Mammary epithelial cell (primary cell): ENCODE measurements at regions of chr20 and their contacts with region 1.

Region 1: DNA sequence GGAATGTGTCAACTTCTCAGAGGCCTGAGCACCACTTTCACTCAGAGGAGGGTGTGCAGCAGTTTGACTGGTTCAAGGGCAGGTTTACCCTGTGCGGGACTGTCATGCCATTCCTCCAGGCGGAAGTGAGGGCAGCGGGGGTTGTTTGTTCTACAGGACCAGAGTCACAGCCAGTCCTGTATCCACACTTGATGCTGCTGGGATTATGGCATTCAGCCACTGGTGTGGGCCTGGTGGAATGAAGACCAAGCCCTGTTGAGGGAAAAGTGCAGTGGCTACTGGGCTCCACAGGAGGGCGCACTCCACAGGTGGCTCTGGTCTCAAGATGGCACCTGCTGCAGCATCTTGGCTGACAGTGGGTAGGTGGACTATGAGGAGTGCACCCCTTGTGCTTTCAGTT is 14.8 kb downstream of the SEMG2 start:
- DNase-seq: no peak
- H3K4me3 ChIP-seq: no peak overlapping the region
- H3K27ac ChIP-seq: no peak overlapping the region
- H3K4me1 ChIP-seq: no peaks in the 10 kb centered on the region
- H3K27me3 ChIP-seq: peaks cover 4% of the 10 kb centered on the region
- CTCF ChIP-seq: peak; percentile 73 to 89

Region 2: DNA sequence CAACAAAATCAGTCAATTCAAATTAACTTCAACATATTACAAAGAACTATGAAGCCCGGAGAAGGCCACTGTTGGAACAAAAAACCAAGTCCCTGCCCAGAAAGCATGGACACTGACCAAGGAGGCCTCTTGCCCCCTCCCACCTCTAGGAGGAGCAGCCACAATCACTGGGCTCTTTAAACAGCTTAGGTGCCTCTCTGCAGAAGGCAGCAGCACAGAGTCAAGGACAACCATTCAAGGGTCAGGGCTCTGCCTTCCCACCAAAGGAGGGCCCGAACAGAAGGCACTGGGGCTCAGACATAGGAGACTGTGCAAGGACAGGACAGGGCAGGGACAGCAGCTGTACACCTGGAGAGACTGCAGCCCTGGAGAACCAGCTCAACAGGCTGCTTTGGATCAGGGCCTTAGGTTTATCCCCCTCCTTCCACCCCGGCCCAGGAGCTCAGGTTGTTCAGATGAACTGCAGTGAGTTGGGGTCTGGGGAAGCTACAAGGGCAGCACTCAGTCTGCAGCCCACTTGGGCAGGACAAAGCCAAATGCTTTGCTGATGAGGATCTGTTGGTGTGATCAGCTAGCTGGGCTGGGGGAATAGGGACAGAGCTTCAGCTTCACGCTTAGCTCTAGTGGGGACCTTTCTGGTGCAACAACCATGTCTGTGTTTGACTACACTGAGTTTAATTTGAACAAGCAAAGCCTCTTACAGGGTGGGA is 293.6 kb before region 1 on chr20:
- CTCF ChIA-PET with region 1: no interaction called
- dilution Hi-C with region 1: no loop called
- in situ Hi-C with region 1: no loop called
- intact Hi-C with region 1: no loop called
- DNase-seq: no peak
- H3K4me3 ChIP-seq: no peak overlapping the region
- H3K27ac ChIP-seq: no peak overlapping the region
- H3K4me1 ChIP-seq: no peaks in the 10 kb centered on the region
- H3K27me3 ChIP-seq: no peaks in the 10 kb centered on the region
- CTCF ChIP-seq: no peak

Region 3: GRCh38 chr20:45300961-45301360 is 65.0 kb after region 1 on chr20:
- CTCF ChIA-PET with region 1: interaction called, 10 read pairs
- dilution Hi-C with region 1: no loop called
- in situ Hi-C with region 1: no loop called
- intact Hi-C with region 1: no loop called
- DNase-seq: peak; percentile 13
- H3K4me3 ChIP-seq: no peak overlapping the region
- H3K27ac ChIP-seq: no peak overlapping the region
- H3K4me1 ChIP-seq: no peaks in the 10 kb centered on the region
- H3K27me3 ChIP-seq: no peaks in the 10 kb centered on the region
- CTCF ChIP-seq: peak; percentile 46 to 62

Region 4: DNA sequence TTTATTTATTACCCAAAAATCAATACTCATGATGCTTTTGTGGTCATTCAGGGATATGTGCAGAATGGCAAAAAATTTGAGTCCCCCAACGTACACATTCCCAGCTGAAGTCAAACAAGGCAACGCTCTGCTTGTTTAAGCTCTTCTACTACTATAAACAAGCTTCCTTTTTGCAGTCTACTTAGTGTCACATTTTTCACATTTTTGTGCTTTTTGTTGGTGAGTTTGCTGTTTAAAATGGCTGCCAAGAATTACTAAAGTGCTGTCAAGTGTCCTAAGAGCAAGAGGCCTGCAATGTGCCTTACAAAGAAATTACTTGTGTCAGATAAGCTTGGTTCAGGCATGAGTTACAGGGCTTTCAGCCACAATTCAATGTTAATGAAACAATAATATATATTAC is 341.0 kb after region 1 on chr20:
- CTCF ChIA-PET with region 1: no interaction called
- dilution Hi-C with region 1: no loop called
- in situ Hi-C with region 1: no loop called
- intact Hi-C with region 1: no loop called
- DNase-seq: no peak
- H3K4me3 ChIP-seq: no peak overlapping the region
- H3K27ac ChIP-seq: no peak overlapping the region
- H3K4me1 ChIP-seq: no peaks in the 10 kb centered on the region
- H3K27me3 ChIP-seq: no peaks in the 10 kb centered on the region
- CTCF ChIP-seq: no peak